ENCODE measurements at regions of chr3 and their contacts with region 1.

Region 1: GRCh38 chr3:187150599-187150998 is 11.3 kb upstream of the RPL39L start:
- DNase-seq: peak; percentile 54
- ATAC-seq: peak; percentile 66
- H3K4me3 Mint-ChIP-seq: no peak overlapping the region
- H3K27ac Mint-ChIP-seq: no peak overlapping the region
- H3K4me1 Mint-ChIP-seq: no peaks in the 10 kb centered on the region
- H3K27me3 Mint-ChIP-seq: peaks cover 5% of the 10 kb centered on the region
- CTCF ChIP-seq: no peak

Region 2: GRCh38 chr3:187130346-187131066 is 20.1 kb before region 1 on chr3:
- CTCF ChIA-PET with region 1: interaction called, 17 read pairs
- POLR2A ChIA-PET with region 1: no interaction called
- intact Hi-C with region 1: no loop called
- DNase-seq: no peak
- ATAC-seq: peak; percentile 90
- H3K4me3 Mint-ChIP-seq: peak overlapping the region; percentile 76
- H3K27ac Mint-ChIP-seq: peak overlapping the region; percentile 96
- H3K4me1 Mint-ChIP-seq: peaks cover 46% of the 10 kb centered on the region
- H3K27me3 Mint-ChIP-seq: no peaks in the 10 kb centered on the region
- CTCF ChIP-seq: no peak

Region 3: DNA sequence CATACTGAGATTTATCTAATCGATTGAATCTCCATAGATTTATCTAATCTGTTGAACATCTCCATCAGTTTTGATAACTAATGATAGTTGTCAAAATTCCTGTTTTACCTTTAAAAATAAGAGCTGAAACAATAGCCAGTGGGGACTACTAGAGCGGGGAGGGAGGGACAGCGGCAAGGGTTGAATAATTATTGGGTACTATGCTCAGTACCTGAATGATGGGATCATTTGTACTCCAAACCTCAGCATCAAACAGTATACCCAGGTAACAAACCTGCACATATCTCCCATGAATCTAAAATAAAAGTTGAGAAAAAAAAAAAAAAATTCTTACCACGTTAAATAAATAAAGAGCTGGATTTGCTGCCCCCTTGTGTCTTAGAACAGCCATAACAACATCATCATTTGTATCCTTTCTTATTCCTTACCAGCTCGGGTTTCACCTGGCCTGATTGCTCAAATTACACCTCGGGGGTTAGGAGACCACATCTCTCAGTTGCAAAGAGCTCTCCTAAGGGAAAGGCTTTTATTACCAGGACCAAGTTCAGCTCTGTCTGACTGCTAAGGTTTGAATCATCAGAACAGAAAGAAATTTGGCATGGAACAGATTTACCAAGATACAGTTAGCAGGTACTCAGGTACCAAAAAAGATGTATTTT is 14.4 kb after region 1 on chr3:
- CTCF ChIA-PET with region 1: interaction called, 27 read pairs
- POLR2A ChIA-PET with region 1: no interaction called
- intact Hi-C with region 1: no loop called
- DNase-seq: no peak
- ATAC-seq: peak; percentile 73
- H3K4me3 Mint-ChIP-seq: no peak overlapping the region
- H3K27ac Mint-ChIP-seq: no peak overlapping the region
- H3K4me1 Mint-ChIP-seq: no peaks in the 10 kb centered on the region
- H3K27me3 Mint-ChIP-seq: peaks cover 14% of the 10 kb centered on the region
- CTCF ChIP-seq: no peak

Region 4: GRCh38 chr3:187669675-187670504 is 519.3 kb after region 1 on chr3 and contains the start of gene SST:
- CTCF ChIA-PET with region 1: no interaction called
- POLR2A ChIA-PET with region 1: no interaction called
- intact Hi-C with region 1: no loop called
- DNase-seq: no peak
- ATAC-seq: no peak
- H3K4me3 Mint-ChIP-seq: no peak within 1 kb of the TSS
- H3K27ac Mint-ChIP-seq: no peak within 1 kb of the TSS
- H3K4me1 Mint-ChIP-seq: peaks cover 2% of the 10 kb centered on the region
- H3K27me3 Mint-ChIP-seq: peaks cover 56% of the 10 kb centered on the region
- CTCF ChIP-seq: no peak
- total RNA-seq, gene SST: not detected in 2 replicates

Measured in activated B cell treated with CpG ODN at 0.5 μM for 24 hours (primary cell).